Breast epithelium (tissue), 4 donors: ENCODE measurements at regions of chr2 and their contacts with region 1.

Region 1: DNA sequence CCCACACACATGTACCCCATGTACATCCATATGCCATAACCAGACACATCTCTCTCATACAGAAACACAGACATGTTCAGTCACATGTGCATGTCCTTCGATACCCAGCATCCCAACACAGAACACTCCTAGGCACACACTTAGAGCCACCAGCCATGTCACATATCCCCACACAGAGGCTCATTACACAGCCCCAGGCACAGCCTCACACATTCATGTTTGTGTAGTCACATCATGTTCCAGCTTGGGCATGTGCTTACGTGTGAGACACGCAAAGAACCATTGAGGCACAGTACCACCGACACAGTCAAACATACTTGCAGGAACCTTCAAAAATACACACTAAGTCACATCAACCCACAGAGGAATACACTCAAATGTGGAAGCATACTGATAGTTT is 17.3 kb downstream of the FBXO41 start:
- DNase-seq: no peak
- H3K4me3 ChIP-seq: no peak overlapping the region
- H3K27ac ChIP-seq: no peak overlapping the region
- H3K4me1 ChIP-seq: peaks cover 0 to 5% of the 10 kb centered on the region in 2 donors
- H3K27me3 ChIP-seq: no peaks in the 10 kb centered on the region
- CTCF ChIP-seq: no peak
- POLR2A ChIP-seq: no peak

Region 2: GRCh38 chr2:73284296-73285158 is 17.5 kb after region 1 on chr2 and contains the start of gene FBXO41:
- intact Hi-C with region 1: loop called (anchors 1 kb)
- DNase-seq: no peak
- H3K4me3 ChIP-seq: peak within 1 kb of the TSS; percentile 53 to 85 (median 74)
- H3K27ac ChIP-seq: no peak within 1 kb of the TSS
- H3K4me1 ChIP-seq: no peaks in the 10 kb centered on the region
- H3K27me3 ChIP-seq: no peaks in the 10 kb centered on the region
- CTCF ChIP-seq: no peak
- POLR2A ChIP-seq: no peak
- total RNA-seq, gene FBXO41: 1.6 to 4.0 (median 3.9) TPM